BJ (cell line): ENCODE measurements at regions of chr22 and their contacts with region 1.

Region 1: GRCh38 chr22:36743011-36743410 is 32.9 kb downstream of the IFT27 start:
- DNase-seq: no peak
- H3K4me3 ChIP-seq: no peak overlapping the region
- H3K27me3 ChIP-seq: peaks cover 3% of the 10 kb centered on the region
- CTCF ChIP-seq: no peak

Region 2: DNA sequence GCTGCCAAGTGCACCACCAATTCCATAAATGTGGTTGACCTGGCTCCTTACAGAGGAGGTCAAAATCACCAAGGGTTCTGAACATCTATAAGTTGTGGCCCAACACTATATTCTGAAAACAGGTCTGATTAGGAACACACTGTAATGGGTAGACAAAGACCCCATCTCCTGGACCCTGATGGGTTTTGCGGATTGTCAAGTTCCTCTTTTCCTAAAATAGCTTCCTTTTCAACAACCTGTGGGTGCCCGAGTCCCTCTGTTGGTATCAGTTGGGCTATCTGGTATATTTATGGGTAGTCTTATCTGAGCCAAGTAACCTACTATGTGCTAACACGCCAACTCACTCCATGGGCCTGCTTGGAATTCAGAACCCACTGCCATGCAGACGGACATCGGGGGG is 29.6 kb before region 1 on chr22:
- CTCF ChIA-PET with region 1: no interaction called
- POLR2A ChIA-PET with region 1: interaction called, 13 read pairs
- DNase-seq: no peak
- H3K4me3 ChIP-seq: no peak overlapping the region
- H3K27me3 ChIP-seq: peaks cover 8% of the 10 kb centered on the region
- CTCF ChIP-seq: no peak